SK-N-SH (cell line): ENCODE measurements at regions of chr22 and their contacts with region 1.

Region 1: DNA sequence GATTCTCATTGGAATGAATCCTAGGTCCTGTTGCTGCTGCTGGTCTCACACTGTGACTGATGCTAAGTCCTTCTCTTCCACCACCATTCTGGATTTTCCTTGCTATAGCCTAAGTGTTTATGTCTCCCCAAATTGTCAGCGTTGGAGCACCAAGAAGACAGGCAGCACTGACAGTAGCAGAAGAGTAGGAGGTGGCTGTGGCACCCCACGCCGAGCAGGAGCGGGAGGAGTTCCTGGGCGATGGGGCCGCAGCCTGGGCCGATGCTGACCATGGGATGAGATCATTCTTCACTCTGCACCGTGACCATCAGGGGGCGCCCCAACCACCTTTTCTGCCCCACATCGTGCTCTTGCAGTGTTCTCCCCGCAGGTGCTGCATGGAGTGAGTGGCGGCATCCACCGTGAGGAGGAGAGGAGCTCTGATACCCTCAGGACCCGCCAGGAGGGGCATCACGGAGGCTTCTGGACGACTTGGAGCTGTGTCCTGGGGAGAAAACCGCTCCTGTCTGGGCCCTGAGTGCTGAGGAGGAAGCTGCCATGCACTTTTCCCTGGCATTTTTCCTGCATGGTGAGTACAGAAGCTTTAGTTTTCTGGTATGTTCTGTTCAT is 57.0 kb downstream of the LRRC74B start:
- DNase-seq: peak; percentile 88
- H3K4me3 ChIP-seq: peak overlapping the region; percentile 30 to 51; a peak in 2 of 4 replicates
- H3K27ac ChIP-seq: no peak overlapping the region
- H3K4me1 ChIP-seq: peaks cover 8 to 11% of the 10 kb centered on the region in 2 experiments; a peak in 2 of 4 replicates
- H3K27me3 ChIP-seq: no peaks in the 10 kb centered on the region; the same call in 1 of the 2 replicates
- CTCF ChIP-seq: peak; percentile 82
- EP300 ChIP-seq: no peak
- RAD21 ChIP-seq: peak; percentile 63

Region 2: DNA sequence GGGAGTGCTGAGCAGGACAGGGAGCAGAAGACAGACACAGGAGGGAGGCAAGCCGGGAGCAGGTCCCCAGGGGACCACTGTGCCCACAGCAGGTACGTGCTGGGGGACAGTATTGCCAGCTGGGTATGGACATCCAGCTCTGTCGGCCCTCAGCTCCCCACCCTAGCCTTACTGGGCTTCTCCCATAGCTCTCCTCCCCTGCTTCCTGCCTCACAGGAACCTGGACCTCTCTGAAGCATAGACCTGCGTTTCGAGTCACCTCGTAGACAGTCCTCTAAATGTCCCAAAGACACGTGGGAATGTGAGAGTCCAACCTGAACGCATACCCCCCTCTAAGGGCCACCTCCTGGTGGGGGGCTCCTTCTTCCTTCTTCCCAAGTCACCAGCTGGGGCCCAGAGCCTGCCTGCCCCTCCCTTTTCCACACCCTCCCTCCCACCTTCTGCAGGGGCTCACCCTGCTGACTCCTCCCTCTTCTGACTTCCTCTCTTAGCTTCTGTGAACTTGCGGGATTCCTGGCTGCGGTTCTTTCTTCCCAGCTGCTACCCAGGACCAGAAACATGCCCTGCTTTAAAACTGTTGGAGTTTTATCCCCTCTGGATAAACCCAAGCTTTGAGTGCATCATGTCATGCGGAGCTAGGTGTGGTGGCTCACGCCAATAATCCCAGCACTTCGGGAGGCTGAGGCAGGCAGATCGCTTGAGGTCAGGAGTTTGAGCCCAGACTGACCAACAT is 47.0 kb before region 1 on chr22:
- CTCF ChIA-PET with region 1: no interaction called
- POLR2A ChIA-PET with region 1: no interaction called
- DNase-seq: no peak
- H3K4me3 ChIP-seq: no peak overlapping the region
- H3K27ac ChIP-seq: no peak overlapping the region
- H3K4me1 ChIP-seq: no peaks in the 10 kb centered on the region
- H3K27me3 ChIP-seq: no peaks in the 10 kb centered on the region
- CTCF ChIP-seq: no peak
- EP300 ChIP-seq: no peak
- RAD21 ChIP-seq: no peak

Region 3: DNA sequence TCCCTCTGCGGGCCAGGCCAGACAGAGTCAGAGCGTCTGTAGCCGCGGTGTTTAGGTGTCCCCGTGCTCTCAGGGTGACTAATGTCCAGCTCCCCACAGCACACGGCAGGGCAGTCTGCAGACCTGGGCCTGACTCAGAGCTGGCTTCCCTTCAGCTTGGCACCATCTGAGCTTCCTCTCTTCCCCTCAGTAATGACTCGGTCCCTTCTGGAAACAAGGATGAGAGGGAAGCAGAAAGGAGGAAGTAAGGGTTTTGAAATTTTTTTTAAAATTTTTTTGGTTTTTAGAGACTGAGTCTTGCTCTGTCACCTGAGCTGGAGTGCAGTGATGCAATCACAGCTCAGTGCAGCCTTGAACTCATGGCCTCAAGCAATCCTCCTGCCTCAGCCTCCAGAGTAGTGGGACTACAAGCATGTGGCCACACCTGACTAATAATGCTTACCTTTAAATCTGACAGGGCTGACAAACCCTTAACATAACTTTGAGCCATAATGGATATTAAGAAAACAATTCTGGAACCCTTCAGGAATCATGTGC is 28.5 kb before region 1 on chr22:
- CTCF ChIA-PET with region 1: interaction called, 15 read pairs
- POLR2A ChIA-PET with region 1: no interaction called
- DNase-seq: no peak
- H3K4me3 ChIP-seq: no peak overlapping the region
- H3K27ac ChIP-seq: no peak overlapping the region
- H3K4me1 ChIP-seq: peaks cover 0 to 5% of the 10 kb centered on the region in 2 experiments; a peak in 1 of 4 replicates
- H3K27me3 ChIP-seq: no peaks in the 10 kb centered on the region
- CTCF ChIP-seq: no peak
- EP300 ChIP-seq: no peak
- RAD21 ChIP-seq: no peak